ENCODE measurements at regions of chr11 and their contacts with region 1.

Region 1: GRCh38 chr11:353179-353873 is 16.0 kb upstream of the B4GALNT4 start:
- DNase-seq: no peak
- H3K4me3 ChIP-seq: no peak overlapping the region
- H3K4me1 ChIP-seq: peaks cover 16% of the 10 kb centered on the region
- H3K27me3 ChIP-seq: no peaks in the 10 kb centered on the region

Region 2: GRCh38 chr11:304915-305843 is 48.1 kb before region 1 on chr11:
- in situ Hi-C with region 1: loop called (anchors 5 kb)
- DNase-seq: peak; percentile 76 to 78
- H3K4me3 ChIP-seq: no peak overlapping the region
- H3K4me1 ChIP-seq: peaks cover 14% of the 10 kb centered on the region
- H3K27me3 ChIP-seq: 0 out of 2 replicates have a peak, but pooled peaks cover 2% of the 10 kb centered on the region

Measured in HAP-1 (cell line).